ENCODE measurements at regions of chr7 and their contacts with region 1.

Region 1: DNA sequence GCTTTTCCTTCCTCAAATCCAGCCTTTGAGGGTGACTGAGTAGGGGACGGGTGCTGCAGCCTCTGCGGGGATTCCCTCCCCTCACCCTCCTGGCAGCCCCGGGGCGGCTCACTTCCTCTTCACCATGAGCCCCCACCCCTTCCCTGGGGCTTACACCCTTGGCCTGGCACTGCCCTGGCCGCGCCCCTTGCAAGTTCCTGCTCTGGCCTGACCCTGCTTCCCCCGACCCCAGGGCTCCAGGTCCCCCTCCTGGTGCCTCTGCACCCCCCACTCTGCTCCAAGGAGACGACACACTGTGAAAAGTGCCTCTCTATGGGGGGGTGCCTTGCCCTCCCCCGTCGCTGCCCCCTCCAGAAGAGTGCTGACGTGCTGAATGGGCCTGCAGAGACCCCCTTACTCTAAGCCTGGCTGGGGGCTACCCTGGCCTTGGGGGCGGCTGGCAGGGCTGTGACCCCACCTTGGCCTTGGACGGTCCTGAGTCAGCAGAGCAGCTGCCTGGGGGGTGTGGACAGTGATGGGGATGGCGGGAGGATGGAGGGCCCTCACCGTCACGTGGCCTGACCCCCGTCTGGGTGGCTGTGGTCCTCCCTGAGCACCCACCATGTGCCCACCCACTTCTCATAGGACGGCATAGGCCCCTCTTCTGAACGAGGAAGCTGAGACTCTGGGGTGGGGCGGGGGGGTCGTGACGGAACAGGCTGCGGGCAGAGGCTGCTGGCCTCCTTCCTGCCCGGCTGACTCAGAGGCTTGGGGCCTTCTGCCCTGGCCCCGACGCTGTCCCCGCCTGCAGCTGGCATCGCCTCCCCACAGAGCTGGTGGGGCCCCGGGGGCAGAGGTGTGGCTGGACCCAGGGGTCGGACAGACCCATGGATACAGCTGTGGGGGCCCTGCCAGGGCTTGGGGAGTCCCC is 9.8 kb downstream of the LFNG start:
- DNase-seq: peak; percentile 69
- ATAC-seq: peak; percentile 34
- H3K4me3 Mint-ChIP-seq: peak overlapping the region; percentile 68
- H3K27ac Mint-ChIP-seq: peak overlapping the region; percentile 90
- H3K4me1 Mint-ChIP-seq: peaks cover 64% of the 10 kb centered on the region
- H3K27me3 Mint-ChIP-seq: no peaks in the 10 kb centered on the region

Region 2: GRCh38 chr7:2325162-2325561 is 204.3 kb before region 1 on chr7:
- CTCF ChIA-PET with region 1: no interaction called
- POLR2A ChIA-PET with region 1: no interaction called
- DNase-seq: no peak
- ATAC-seq: no peak
- H3K4me3 Mint-ChIP-seq: no peak overlapping the region
- H3K27ac Mint-ChIP-seq: no peak overlapping the region
- H3K4me1 Mint-ChIP-seq: peaks cover 5% of the 10 kb centered on the region
- H3K27me3 Mint-ChIP-seq: no peaks in the 10 kb centered on the region

Region 3: DNA sequence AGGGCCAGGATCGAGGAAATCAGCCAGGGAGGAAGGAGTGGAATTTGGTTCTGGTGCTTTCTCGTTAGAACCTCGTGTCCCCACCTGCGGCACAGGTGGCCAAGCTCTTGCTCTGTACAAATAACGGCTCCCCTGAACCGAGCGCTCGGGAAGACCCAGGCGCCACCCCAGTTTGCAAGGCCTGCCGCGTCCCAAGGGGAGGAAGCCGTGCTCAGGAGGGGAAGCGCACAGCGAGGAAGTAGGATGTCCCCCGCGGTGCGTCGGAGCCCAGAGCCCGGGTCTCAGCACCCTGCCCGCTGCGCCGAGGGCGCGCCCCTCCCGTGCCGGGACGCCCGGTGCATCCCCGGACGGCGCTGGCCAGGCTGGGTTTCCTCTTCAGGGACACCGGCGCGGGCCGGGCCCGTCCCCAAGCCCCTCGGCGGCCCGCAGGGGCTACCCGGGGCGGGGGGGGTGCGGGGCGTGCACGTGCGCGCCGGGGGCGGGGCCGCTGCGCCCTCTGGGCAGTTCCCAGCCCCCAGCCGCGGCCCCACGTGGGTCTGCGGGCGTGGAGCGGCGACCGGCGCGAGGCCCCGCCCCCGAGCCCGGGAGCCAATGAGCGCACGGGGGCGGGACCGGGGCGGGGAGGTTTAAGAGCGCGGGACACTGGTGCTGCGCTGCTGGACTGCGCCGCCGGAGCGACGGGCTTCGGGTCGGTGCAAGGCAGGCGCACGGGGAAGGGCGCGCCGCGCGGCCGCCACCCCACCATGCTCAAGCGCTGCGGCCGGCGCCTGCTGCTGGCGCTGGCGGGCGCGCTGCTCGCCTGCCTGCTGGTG is 10.1 kb before region 1 on chr7 and contains the start of gene LFNG:
- CTCF ChIA-PET with region 1: no interaction called
- POLR2A ChIA-PET with region 1: interaction called, 13 read pairs
- DNase-seq: peak; percentile 90
- ATAC-seq: peak; percentile 75
- H3K4me3 Mint-ChIP-seq: peak within 1 kb of the TSS; percentile 98
- H3K27ac Mint-ChIP-seq: peak within 1 kb of the TSS; percentile 87
- H3K4me1 Mint-ChIP-seq: peaks cover 29% of the 10 kb centered on the region
- H3K27me3 Mint-ChIP-seq: no peaks in the 10 kb centered on the region
- total RNA-seq, gene LFNG: 134 to 136 TPM

Measured in activated CD8-positive, alpha-beta T cell treated with anti-CD3 and anti-CD28 coated beads, Interleukin-2, amount 10 ng/mL, durations not matched to agents 7 days and 5 days (primary cell).